ENCODE measurements at regions of chr6 and their contacts with region 1.

Region 1: DNA sequence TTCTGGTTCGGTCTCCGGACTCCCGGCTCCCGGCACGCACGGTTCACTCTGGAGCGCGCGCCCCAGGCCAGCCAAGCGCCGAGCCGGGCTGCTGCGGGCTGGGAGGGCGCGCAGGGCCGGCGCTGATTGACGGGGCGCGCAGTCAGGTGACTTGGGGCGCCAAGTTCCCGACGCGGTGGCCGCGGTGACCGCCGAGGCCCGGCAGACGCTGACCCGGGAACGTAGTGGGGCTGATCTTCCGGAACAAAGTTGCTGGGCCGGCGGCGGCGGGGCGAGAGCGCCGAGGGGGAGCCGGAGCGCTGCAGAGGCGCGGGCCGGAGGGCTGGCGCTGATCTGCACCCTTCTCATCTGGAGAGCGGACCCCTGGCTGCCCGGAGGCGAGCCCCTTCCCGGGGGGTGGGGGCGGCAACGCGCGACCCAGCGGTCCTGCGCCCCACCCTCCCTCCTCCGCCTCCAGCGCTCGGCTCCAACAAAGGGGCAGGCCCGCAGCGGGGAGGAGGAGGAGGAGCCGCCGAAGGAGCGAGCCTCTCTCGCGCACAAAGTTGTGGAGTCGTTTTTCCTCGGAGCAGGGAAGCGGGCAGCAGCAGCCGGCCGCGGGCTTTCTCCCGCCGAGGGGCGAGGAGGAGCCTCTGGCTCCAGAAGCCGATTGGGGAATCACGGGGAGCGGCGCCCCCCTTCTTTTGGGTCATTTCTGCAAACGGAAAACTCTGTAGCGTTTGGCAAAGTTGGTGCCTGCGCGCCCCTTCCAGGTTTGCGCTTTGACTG is at the start of gene UTRN:
- DNase-seq: peak; percentile 79
- ATAC-seq: peak; percentile 84
- H3K4me3 ChIP-seq: peak within 1 kb of the TSS; percentile 67
- H3K27ac ChIP-seq: peak within 1 kb of the TSS; percentile 84
- H3K4me1 ChIP-seq: no peaks in the 10 kb centered on the region; the same call in 1 of the 2 replicates
- H3K27me3 ChIP-seq: no peaks in the 10 kb centered on the region
- CTCF ChIP-seq: no peak
- POLR2A ChIP-seq: no peak
- RAD21 ChIP-seq: 0 out of 2 replicates have a peak, but pooled peaks have one; percentile 6
- total RNA-seq, gene UTRN: 83.5 and 91.4 TPM in 2 replicates

Region 2: DNA sequence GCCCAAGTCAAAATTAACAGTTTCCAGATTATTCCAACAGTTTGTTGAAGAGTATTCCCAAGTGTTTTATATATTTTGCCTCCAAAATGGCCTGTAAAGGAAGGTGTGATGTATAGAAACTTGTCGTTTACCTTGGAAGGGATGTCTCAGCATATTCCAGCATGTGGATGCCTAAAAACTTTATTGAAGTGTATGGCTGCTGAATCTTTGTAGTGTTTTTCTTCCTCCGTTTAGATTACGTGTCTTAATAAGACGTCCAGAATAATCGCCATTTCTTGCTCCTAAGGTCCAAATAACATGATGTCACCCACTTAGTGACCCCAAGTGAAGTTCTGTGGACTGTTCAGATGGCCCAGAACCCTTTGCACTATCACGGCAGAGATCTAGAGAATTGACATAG is 171.6 kb before region 1 on chr6:
- CTCF ChIA-PET with region 1: no interaction called
- POLR2A ChIA-PET with region 1: no interaction called
- dilution Hi-C with region 1: no loop called
- in situ Hi-C with region 1: no loop called
- intact Hi-C with region 1: no loop called
- DNase-seq: no peak
- ATAC-seq: no peak
- H3K4me3 ChIP-seq: no peak overlapping the region
- H3K27ac ChIP-seq: no peak overlapping the region
- H3K4me1 ChIP-seq: no peaks in the 10 kb centered on the region
- H3K27me3 ChIP-seq: peaks cover 14% of the 10 kb centered on the region
- CTCF ChIP-seq: no peak
- POLR2A ChIP-seq: no peak
- RAD21 ChIP-seq: no peak

Region 3: GRCh38 chr6:144215932-144216667 is 68.9 kb before region 1 on chr6:
- CTCF ChIA-PET with region 1: interaction called, 3 read pairs
- POLR2A ChIA-PET with region 1: no interaction called
- dilution Hi-C with region 1: no loop called
- in situ Hi-C with region 1: no loop called
- intact Hi-C with region 1: loop called (anchors 1 kb)
- DNase-seq: peak; percentile 98
- ATAC-seq: peak; percentile 89
- H3K4me3 ChIP-seq: peak overlapping the region; percentile 58
- H3K27ac ChIP-seq: peak overlapping the region; percentile 72
- H3K4me1 ChIP-seq: peaks cover 8% of the 10 kb centered on the region
- H3K27me3 ChIP-seq: no peaks in the 10 kb centered on the region
- CTCF ChIP-seq: peak; percentile 83
- POLR2A ChIP-seq: 0 out of 2 replicates have a peak, but pooled peaks have one; percentile 33
- RAD21 ChIP-seq: peak; percentile 81

Region 4: DNA sequence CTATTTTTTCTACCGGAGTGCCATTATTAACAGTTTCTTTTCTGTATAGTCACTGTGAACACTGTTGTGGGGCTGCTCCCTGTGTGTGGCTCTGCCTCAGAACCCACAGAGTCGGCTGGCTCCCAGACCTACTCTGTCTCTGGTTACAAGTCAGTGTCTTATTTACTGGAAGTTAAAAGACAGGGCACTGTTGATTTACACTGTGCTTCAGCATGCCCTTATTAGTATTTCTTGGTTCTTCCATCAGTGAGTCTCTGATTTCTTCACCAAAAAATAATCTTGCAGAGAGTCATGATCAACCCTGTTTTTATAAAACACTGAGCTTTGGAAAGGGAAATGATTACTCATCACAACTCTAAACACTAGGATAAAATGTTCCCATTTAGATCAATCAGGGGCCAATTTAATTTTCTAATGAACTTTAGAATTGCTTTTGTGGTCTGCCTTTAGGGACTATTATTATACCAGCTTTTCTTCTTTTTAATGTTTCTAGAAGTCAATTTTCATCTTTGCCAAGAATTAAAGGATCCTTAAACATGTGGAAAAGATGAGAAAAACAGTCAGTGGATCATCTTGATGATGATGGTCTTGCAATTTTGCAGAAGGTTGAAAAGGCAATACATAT is 92.7 kb after region 1 on chr6:
- CTCF ChIA-PET with region 1: no interaction called
- POLR2A ChIA-PET with region 1: no interaction called
- dilution Hi-C with region 1: no loop called
- in situ Hi-C with region 1: no loop called
- intact Hi-C with region 1: loop called (anchors 1 kb)
- DNase-seq: peak; percentile 86
- ATAC-seq: peak; percentile 93
- H3K4me3 ChIP-seq: no peak overlapping the region
- H3K27ac ChIP-seq: peak overlapping the region; percentile 76
- H3K4me1 ChIP-seq: peaks cover 7% of the 10 kb centered on the region
- H3K27me3 ChIP-seq: no peaks in the 10 kb centered on the region
- CTCF ChIP-seq: no peak
- POLR2A ChIP-seq: peak; percentile 33; the same call in 1 of the 2 replicates
- RAD21 ChIP-seq: no peak

Region 5: DNA sequence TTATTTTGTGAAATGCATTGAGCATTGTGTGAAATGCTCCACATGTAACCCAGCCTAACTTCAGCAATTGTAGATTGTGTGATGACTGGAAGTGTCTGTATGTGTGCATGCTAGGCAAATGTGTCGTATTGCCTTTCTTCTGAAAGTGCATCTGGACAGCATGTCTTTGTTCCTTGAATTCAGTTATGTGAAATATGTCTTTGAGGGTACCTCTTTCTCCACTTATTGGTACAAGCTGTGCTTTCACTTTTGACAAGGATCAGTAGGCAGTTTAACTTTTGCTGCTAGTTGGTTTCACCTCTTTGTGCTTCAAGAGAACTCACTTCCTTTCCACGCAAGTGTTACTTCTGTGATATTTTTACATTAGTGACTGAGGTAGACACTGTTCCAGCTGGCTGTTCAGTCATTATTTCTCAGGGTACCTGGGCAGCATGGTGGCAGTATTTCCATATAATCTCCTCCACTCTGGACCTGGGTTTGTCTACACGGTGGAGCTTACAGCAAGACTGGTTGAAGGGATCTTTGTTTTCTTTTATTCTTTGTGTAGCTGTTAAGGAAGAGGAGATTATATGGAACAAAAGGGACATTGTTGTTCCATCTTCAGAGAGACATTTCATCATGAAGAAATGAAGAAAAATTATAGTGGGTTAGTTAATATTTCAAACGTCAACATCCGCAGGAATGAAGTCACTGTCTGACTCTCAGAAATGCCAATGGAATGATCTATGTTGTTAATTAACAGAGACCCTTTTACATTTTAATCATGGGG is 175.5 kb after region 1 on chr6:
- CTCF ChIA-PET with region 1: no interaction called
- POLR2A ChIA-PET with region 1: interaction called, 18 read pairs
- dilution Hi-C with region 1: no loop called
- in situ Hi-C with region 1: no loop called
- intact Hi-C with region 1: no loop called
- DNase-seq: no peak
- ATAC-seq: no peak
- H3K4me3 ChIP-seq: no peak overlapping the region
- H3K27ac ChIP-seq: no peak overlapping the region
- H3K4me1 ChIP-seq: no peaks in the 10 kb centered on the region
- H3K27me3 ChIP-seq: no peaks in the 10 kb centered on the region
- CTCF ChIP-seq: no peak
- POLR2A ChIP-seq: no peak
- RAD21 ChIP-seq: no peak

Region 6: DNA sequence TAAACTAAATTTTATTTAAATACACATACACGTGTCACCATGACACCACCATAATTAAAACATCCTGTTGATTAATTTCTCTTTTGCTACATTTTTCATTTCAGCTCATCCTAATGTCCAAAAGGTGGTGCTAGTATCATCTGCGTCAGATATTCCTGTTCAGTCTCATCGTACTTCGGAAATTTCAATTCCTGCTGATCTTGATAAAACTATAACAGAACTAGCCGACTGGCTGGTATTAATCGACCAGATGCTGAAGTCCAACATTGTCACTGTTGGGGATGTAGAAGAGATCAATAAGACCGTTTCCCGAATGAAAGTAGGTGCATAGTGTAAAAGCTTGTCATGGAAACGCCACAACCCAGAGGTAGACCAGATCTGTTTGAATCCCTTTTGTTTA is 263.6 kb after region 1 on chr6:
- CTCF ChIA-PET with region 1: no interaction called
- POLR2A ChIA-PET with region 1: no interaction called
- dilution Hi-C with region 1: no loop called
- in situ Hi-C with region 1: no loop called
- intact Hi-C with region 1: loop called (anchors 5 kb)
- DNase-seq: no peak
- ATAC-seq: no peak
- H3K4me3 ChIP-seq: no peak overlapping the region
- H3K27ac ChIP-seq: no peak overlapping the region
- H3K4me1 ChIP-seq: no peaks in the 10 kb centered on the region
- H3K27me3 ChIP-seq: no peaks in the 10 kb centered on the region
- CTCF ChIP-seq: no peak
- POLR2A ChIP-seq: no peak
- RAD21 ChIP-seq: no peak